ENCODE measurements at regions of chr13 and their contacts with region 1.

Region 1: DNA sequence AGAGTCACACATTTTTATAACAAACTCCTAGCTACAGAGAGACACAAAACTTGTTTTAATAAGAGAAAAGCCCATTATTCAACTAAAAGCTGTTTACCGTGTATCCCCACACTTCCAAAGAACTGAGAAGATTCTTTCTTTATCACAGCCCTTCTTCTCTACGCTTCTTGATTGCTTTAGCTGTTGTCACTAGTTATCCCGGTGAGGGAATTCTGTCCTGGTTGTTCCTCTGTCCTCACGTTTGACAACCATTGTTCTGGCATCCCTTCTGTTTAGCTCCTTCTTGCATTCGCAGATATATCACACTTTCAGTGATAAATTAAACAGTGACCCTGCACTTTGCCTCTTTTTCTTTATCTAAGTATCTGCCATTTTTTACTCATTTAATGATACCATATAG is 1035.1 kb upstream of the PCDH20 start:
- DNase-seq: no peak
- ATAC-seq: no peak
- H3K4me3 Mint-ChIP-seq: no peak overlapping the region
- H3K27ac Mint-ChIP-seq: no peak overlapping the region
- H3K4me1 Mint-ChIP-seq: no peaks in the 10 kb centered on the region
- H3K27me3 Mint-ChIP-seq: no peaks in the 10 kb centered on the region

Region 2: GRCh38 chr13:63567031-63567430 is 1116.3 kb after region 1 on chr13:
- CTCF ChIA-PET with region 1: no interaction called
- POLR2A ChIA-PET with region 1: no interaction called
- intact Hi-C with region 1: loop called in 1 of 2 experiments (anchors 5 kb)
- DNase-seq: no peak
- ATAC-seq: no peak
- H3K4me3 Mint-ChIP-seq: no peak overlapping the region
- H3K27ac Mint-ChIP-seq: no peak overlapping the region
- H3K4me1 Mint-ChIP-seq: no peaks in the 10 kb centered on the region
- H3K27me3 Mint-ChIP-seq: no peaks in the 10 kb centered on the region